ENCODE measurements at regions of chr13 and their contacts with region 1.

Region 1: GRCh38 chr13:25507841-25508240 is 136.1 kb downstream of the ATP8A2 start:
- DNase-seq: no peak
- H3K4me3 Mint-ChIP-seq: no peak overlapping the region
- H3K27ac Mint-ChIP-seq: no peak overlapping the region
- H3K4me1 Mint-ChIP-seq: no peaks in the 10 kb centered on the region
- H3K27me3 Mint-ChIP-seq: no peaks in the 10 kb centered on the region

Region 2: DNA sequence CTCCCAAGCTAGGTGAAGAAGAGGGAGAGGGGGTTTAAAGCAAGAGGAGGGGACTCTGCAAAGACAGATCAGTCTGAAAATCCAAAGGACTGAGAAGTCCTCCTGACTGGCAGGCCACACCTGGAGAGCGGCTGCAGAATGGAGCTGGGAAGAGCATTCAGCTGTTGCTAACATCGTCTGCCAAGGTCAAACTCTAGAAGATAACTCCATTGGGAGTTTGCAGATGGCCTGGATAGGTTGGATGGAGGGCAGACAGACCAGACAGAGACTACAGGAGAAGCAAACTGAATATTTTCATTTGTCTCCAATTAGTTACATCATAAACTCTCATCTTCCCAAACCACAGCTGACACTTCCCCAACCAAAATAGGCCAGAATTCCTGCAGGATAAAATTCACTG is 563.9 kb after region 1 on chr13:
- intact Hi-C with region 1: loop called (anchors 2 kb)
- DNase-seq: no peak
- H3K4me3 Mint-ChIP-seq: no peak overlapping the region
- H3K27ac Mint-ChIP-seq: no peak overlapping the region
- H3K4me1 Mint-ChIP-seq: peaks cover 4% of the 10 kb centered on the region
- H3K27me3 Mint-ChIP-seq: peaks cover 18% of the 10 kb centered on the region

Region 3: GRCh38 chr13:26482451-26483197 is 974.8 kb after region 1 on chr13:
- intact Hi-C with region 1: no loop called
- DNase-seq: peak; percentile 53
- H3K4me3 Mint-ChIP-seq: no peak overlapping the region
- H3K27ac Mint-ChIP-seq: no peak overlapping the region
- H3K4me1 Mint-ChIP-seq: peaks cover 7% of the 10 kb centered on the region
- H3K27me3 Mint-ChIP-seq: no peaks in the 10 kb centered on the region